ENCODE measurements at regions of chr2 and their contacts with region 1.

Region 1: GRCh38 chr2:105576440-105577252 is 168.1 kb upstream of the NCK2 start:
- DNase-seq: peak; percentile 16
- ATAC-seq: peak; percentile 76
- H3K4me3 ChIP-seq: no peak overlapping the region
- H3K27ac ChIP-seq: no peak overlapping the region
- H3K4me1 ChIP-seq: no peaks in the 10 kb centered on the region
- H3K27me3 ChIP-seq: peaks cover 14% of the 10 kb centered on the region; the same call in 1 of the 2 replicates
- CTCF ChIP-seq: peak; percentile 46 to 61 (median 59); a peak in 5 of 6 replicates
- POLR2A ChIP-seq: no peak
- RAD21 ChIP-seq: peak; percentile 77

Region 2: GRCh38 chr2:105888625-105889400 is 312.2 kb after region 1 on chr2:
- CTCF ChIA-PET with region 1: no interaction called
- POLR2A ChIA-PET with region 1: no interaction called
- RAD21 ChIA-PET with region 1: no interaction called
- intact Hi-C with region 1: loop called (anchors 5 kb)
- DNase-seq: peak; percentile 7
- ATAC-seq: peak; percentile 69
- H3K4me3 ChIP-seq: no peak overlapping the region
- H3K27ac ChIP-seq: no peak overlapping the region
- H3K4me1 ChIP-seq: no peaks in the 10 kb centered on the region
- H3K27me3 ChIP-seq: no peaks in the 10 kb centered on the region
- CTCF ChIP-seq: peak in 2 of 3 experiments; percentile 47; a peak in 4 of 6 replicates
- POLR2A ChIP-seq: no peak
- RAD21 ChIP-seq: peak; percentile 65

Region 3: GRCh38 chr2:106085181-106085940 is 508.7 kb after region 1 on chr2:
- CTCF ChIA-PET with region 1: interaction called, 3 read pairs
- POLR2A ChIA-PET with region 1: no interaction called
- RAD21 ChIA-PET with region 1: no interaction called
- intact Hi-C with region 1: loop called (anchors 5 kb)
- DNase-seq: no peak
- ATAC-seq: peak; percentile 67
- H3K4me3 ChIP-seq: no peak overlapping the region
- H3K27ac ChIP-seq: no peak overlapping the region
- H3K4me1 ChIP-seq: no peaks in the 10 kb centered on the region
- H3K27me3 ChIP-seq: no peaks in the 10 kb centered on the region; the same call in 1 of the 2 replicates
- CTCF ChIP-seq: peak; percentile 21 to 38 (median 33); a peak in 4 of 6 replicates
- POLR2A ChIP-seq: no peak
- RAD21 ChIP-seq: peak; percentile 53

Region 4: DNA sequence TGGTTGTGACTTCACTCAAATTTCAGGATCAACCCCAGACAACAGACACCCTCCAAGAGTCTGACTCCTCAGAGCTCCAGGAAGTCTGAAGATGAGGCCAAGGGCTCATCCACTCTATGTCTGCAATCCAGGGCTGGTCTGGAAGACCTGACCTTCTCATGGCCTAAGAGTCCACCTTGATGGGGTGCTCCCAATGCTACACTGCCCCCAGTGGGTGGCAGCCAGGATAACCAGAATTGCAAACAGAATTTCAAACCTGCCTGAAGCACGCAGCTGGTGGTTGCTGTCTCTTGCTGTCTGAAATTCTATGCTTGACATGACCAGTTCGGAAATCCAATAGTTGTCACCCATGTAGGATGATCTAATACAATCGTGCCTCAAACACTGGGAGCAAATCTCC is 521.4 kb after region 1 on chr2:
- CTCF ChIA-PET with region 1: interaction called, 4 read pairs
- POLR2A ChIA-PET with region 1: no interaction called
- RAD21 ChIA-PET with region 1: no interaction called
- intact Hi-C with region 1: loop called (anchors 1 kb)
- DNase-seq: no peak
- ATAC-seq: peak; percentile 75
- H3K4me3 ChIP-seq: no peak overlapping the region
- H3K27ac ChIP-seq: no peak overlapping the region
- H3K4me1 ChIP-seq: no peaks in the 10 kb centered on the region
- H3K27me3 ChIP-seq: no peaks in the 10 kb centered on the region
- CTCF ChIP-seq: peak; percentile 15 to 57 (median 57); a peak in 4 of 6 replicates
- POLR2A ChIP-seq: no peak
- RAD21 ChIP-seq: peak; percentile 67

Region 5: DNA sequence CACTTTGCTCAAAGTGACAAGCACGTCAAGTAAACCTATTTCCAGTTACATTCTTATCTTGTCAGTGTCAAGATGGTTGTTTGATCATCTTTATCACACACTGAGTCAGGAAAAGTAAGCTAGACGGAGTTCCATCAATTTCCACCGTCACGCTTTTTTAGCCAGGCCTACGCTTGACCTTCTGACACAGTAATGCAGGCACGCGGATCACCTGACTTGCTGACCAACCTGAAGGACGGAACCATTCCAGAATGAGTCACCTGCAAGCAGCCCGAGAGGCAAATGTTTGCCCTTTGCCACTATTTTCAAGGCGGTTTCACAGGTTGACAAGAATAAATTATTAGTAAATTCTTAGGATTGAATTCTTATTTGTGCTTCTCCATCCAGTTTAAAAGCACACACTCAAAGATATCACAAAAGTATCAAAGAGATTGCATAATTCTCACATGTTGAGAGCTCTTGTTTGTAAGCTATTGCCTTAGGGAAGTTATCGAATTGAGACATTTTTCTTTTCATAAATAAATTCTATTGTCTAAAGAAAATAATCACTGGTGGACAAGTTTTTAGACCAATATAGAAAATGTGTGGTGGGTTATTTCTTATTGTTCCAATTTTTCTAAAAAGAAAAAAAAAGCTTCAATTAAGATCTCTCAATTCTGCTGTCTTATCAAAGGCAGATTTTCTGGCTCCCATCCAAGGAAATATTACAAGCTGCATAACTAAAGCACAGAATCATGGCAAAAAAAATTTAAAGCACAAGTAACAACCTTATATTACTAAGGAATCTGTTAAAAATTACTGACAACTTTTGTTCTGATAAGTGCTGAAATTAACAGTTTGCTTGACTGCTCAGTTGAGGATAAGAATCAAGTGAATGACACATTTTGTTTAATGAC is 585.5 kb after region 1 on chr2:
- CTCF ChIA-PET with region 1: no interaction called
- POLR2A ChIA-PET with region 1: no interaction called
- RAD21 ChIA-PET with region 1: no interaction called
- intact Hi-C with region 1: no loop called
- DNase-seq: peak; percentile 75
- ATAC-seq: peak; percentile 94
- H3K4me3 ChIP-seq: peak overlapping the region in 1 of 2 experiments; percentile 5; a peak in 2 of 4 replicates
- H3K27ac ChIP-seq: peak overlapping the region; percentile 58; the same call in 1 of the 2 replicates
- H3K4me1 ChIP-seq: peaks cover 26 to 42% of the 10 kb centered on the region in 2 experiments
- H3K27me3 ChIP-seq: no peaks in the 10 kb centered on the region
- CTCF ChIP-seq: no peak
- POLR2A ChIP-seq: no peak
- RAD21 ChIP-seq: no peak

Measured in HCT116 (cell line).